ENCODE measurements at regions of chr6 and their contacts with region 1.

Region 1: GRCh38 chr6:125818225-125818657 is 27.5 kb downstream of the NCOA7 start:
- DNase-seq: no peak
- H3K4me3 ChIP-seq: peak overlapping the region; percentile 2
- H3K4me3 Mint-ChIP-seq: peak overlapping the region; percentile 63
- H3K27ac Mint-ChIP-seq: peak overlapping the region; percentile 78
- H3K4me1 ChIP-seq: peaks cover 74% of the 10 kb centered on the region
- H3K4me1 Mint-ChIP-seq: peaks cover 33% of the 10 kb centered on the region
- H3K27me3 ChIP-seq: no peaks in the 10 kb centered on the region
- H3K27me3 Mint-ChIP-seq: no peaks in the 10 kb centered on the region
- CTCF ChIP-seq: no peak

Region 2: GRCh38 chr6:125790358-125791150 is 27.7 kb before region 1 on chr6 and contains the start of gene NCOA7:
- CTCF ChIA-PET with region 1: no interaction called
- POLR2A ChIA-PET with region 1: interaction called, 4 read pairs
- intact Hi-C with region 1: loop called (anchors 1 kb)
- DNase-seq: peak; percentile 82 to 84
- H3K4me3 ChIP-seq: peak within 1 kb of the TSS; percentile 91
- H3K4me3 Mint-ChIP-seq: peak within 1 kb of the TSS; percentile 91
- H3K27ac Mint-ChIP-seq: peak within 1 kb of the TSS; percentile 88
- H3K4me1 ChIP-seq: peaks cover 20% of the 10 kb centered on the region
- H3K4me1 Mint-ChIP-seq: peaks cover 13% of the 10 kb centered on the region
- H3K27me3 ChIP-seq: no peaks in the 10 kb centered on the region
- H3K27me3 Mint-ChIP-seq: no peaks in the 10 kb centered on the region
- CTCF ChIP-seq: no peak
- total RNA-seq, gene NCOA7: 62.0 and 67.9 TPM in 2 replicates

Region 3: DNA sequence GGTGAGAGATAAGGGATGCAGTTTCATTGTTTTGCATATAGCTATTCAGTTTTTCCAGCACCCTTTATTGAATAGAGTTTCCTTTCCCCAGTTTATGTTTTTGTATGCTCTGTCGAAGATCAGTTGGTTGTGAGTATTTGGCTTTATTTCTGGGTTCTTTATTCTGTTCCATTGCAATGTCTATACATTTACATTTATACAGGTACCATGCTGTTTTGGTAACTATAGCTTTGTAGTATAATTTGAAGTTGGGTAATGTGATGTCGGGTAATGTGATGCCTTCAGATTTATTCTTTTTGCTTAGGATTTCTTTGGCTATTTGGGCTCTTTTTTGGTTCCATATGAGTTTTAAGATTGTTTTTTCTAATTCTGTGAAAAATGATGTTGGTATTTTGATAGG is 34.3 kb after region 1 on chr6:
- CTCF ChIA-PET with region 1: no interaction called
- POLR2A ChIA-PET with region 1: no interaction called
- intact Hi-C with region 1: loop called (anchors 1 kb)
- DNase-seq: no peak
- H3K4me3 ChIP-seq: no peak overlapping the region
- H3K4me3 Mint-ChIP-seq: no peak overlapping the region
- H3K27ac Mint-ChIP-seq: no peak overlapping the region
- H3K4me1 ChIP-seq: 0 out of 2 replicates have a peak, but pooled peaks cover 4% of the 10 kb centered on the region
- H3K4me1 Mint-ChIP-seq: peaks cover 8% of the 10 kb centered on the region
- H3K27me3 ChIP-seq: no peaks in the 10 kb centered on the region
- H3K27me3 Mint-ChIP-seq: no peaks in the 10 kb centered on the region
- CTCF ChIP-seq: no peak

Region 4: GRCh38 chr6:125884634-125885371 is 66.6 kb after region 1 on chr6:
- CTCF ChIA-PET with region 1: no interaction called
- POLR2A ChIA-PET with region 1: no interaction called
- intact Hi-C with region 1: no loop called
- DNase-seq: no peak
- H3K4me3 ChIP-seq: no peak overlapping the region
- H3K4me3 Mint-ChIP-seq: no peak overlapping the region
- H3K27ac Mint-ChIP-seq: no peak overlapping the region
- H3K4me1 ChIP-seq: 0 out of 2 replicates have a peak, but pooled peaks cover 6% of the 10 kb centered on the region
- H3K4me1 Mint-ChIP-seq: no peaks in the 10 kb centered on the region
- H3K27me3 ChIP-seq: no peaks in the 10 kb centered on the region
- H3K27me3 Mint-ChIP-seq: no peaks in the 10 kb centered on the region
- CTCF ChIP-seq: no peak

Region 5: DNA sequence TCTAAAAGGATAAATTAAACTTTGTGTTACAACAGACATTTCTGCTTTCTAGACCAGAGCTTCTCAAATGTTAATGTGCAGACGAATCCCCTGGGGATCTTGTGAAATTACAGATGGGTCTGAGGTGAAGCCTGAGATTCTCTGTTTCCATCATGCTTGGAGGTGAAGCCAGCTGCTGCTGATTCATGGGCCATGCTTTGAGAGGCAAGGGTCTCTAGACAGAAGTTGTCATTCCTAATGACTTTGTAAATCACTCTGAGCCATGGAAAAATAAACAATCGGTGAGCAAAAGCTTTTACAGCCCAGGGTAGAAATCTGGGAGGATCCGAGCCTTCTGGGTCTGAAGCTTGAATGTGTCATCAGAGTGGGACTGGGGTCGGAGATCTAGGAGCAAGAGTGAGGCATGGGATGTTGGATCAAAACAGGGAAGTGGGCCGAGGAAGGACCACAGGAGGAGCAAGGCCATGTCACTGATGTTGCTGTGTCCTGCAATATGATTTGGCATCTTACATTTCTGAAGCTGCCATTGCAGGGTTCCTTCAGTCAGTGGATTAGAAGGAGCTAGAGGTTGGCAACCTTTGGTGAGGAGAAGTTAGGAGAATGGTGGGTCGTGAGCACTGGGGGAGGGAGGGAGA is 245.4 kb after region 1 on chr6:
- CTCF ChIA-PET with region 1: no interaction called
- POLR2A ChIA-PET with region 1: no interaction called
- intact Hi-C with region 1: no loop called
- DNase-seq: no peak
- H3K4me3 ChIP-seq: no peak overlapping the region
- H3K4me3 Mint-ChIP-seq: peak overlapping the region; percentile 14
- H3K27ac Mint-ChIP-seq: peak overlapping the region; percentile 34
- H3K4me1 ChIP-seq: peaks cover 21% of the 10 kb centered on the region
- H3K4me1 Mint-ChIP-seq: peaks cover 23% of the 10 kb centered on the region
- H3K27me3 ChIP-seq: no peaks in the 10 kb centered on the region
- H3K27me3 Mint-ChIP-seq: no peaks in the 10 kb centered on the region
- CTCF ChIP-seq: no peak